Right cardiac atrium (tissue), 5 donors: ENCODE measurements at regions of chr7 and their contacts with region 1.

Region 1: DNA sequence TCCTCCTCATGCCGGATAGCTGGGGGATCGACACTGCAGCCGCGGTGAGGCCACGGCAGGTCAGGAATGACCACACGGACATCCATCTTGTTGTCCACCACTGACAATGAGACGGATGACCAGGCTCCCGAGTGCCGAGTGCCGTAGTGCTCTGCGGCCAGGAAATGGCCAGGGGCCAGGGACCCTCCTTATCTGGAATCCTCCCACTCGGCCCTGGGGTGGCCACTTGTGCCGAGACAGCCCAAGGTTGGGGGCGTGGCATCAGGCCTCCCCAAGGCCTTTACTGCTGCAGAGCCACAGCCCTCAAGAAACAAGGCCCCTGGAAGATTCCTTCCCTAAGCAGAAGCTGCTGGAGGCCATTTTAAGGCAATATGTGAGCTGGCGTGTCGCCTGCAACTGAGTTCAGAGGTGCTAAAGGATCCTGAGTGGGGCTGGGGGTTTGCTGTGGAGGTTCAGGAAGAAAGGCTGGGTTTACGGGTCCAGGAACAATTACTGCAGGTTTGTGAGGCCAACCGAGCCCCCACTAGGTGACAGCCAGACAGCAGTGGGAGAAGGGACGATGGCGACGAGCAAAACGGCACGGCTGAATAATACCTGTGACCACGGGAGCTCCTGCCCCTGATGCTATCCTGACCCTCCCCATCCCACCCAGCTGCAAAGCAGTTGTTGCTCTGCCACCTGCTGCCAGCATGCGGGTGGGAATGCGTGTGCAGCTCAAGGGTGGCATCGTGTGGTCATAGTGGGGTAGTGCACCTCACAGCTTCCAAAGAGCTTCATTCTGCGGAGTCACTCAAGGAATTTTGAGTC is 31.6 kb upstream of the LEP start:
- DNase-seq: peak; percentile 54 to 79 (median 77)
- ATAC-seq: peak; percentile 79 to 86
- H3K4me3 ChIP-seq: no peak overlapping the region
- H3K27ac ChIP-seq: no peak overlapping the region
- H3K4me1 ChIP-seq: no peaks in the 10 kb centered on the region
- H3K27me3 ChIP-seq: no peaks in the 10 kb centered on the region

Region 2: GRCh38 chr7:127708788-127709187 is 500.6 kb before region 1 on chr7:
- intact Hi-C with region 1: loop called (anchors 2 to 5 kb)
- DNase-seq: peak in 2 of 3 donors; percentile 68 to 80
- ATAC-seq: peak; percentile 85 to 88
- H3K4me3 ChIP-seq: no peak overlapping the region
- H3K27ac ChIP-seq: no peak overlapping the region
- H3K4me1 ChIP-seq: no peaks in the 10 kb centered on the region
- H3K27me3 ChIP-seq: no peaks in the 10 kb centered on the region

Region 3: GRCh38 chr7:127717502-127718339 is 491.7 kb before region 1 on chr7:
- intact Hi-C with region 1: loop called in 2 of 4 experiments (anchors 5 kb)
- DNase-seq: no peak
- ATAC-seq: no peak
- H3K4me3 ChIP-seq: no peak overlapping the region
- H3K27ac ChIP-seq: no peak overlapping the region
- H3K4me1 ChIP-seq: no peaks in the 10 kb centered on the region
- H3K27me3 ChIP-seq: no peaks in the 10 kb centered on the region

Region 4: GRCh38 chr7:128031901-128032604 is 177.4 kb before region 1 on chr7:
- intact Hi-C with region 1: loop called in 1 of 4 experiments (anchors 5 kb)
- DNase-seq: peak; percentile 59 to 78 (median 75)
- ATAC-seq: peak; percentile 73 to 83
- H3K4me3 ChIP-seq: peak overlapping the region; percentile 91
- H3K27ac ChIP-seq: peak overlapping the region; percentile 19
- H3K4me1 ChIP-seq: peaks cover 1% of the 10 kb centered on the region
- H3K27me3 ChIP-seq: no peaks in the 10 kb centered on the region

Region 5: GRCh38 chr7:128135515-128136214 is 73.8 kb before region 1 on chr7:
- intact Hi-C with region 1: loop called (anchors 5 kb)
- DNase-seq: peak; percentile 49 to 82 (median 81)
- ATAC-seq: peak; percentile 87 to 93
- H3K4me3 ChIP-seq: peak overlapping the region; percentile 62
- H3K27ac ChIP-seq: no peak overlapping the region
- H3K4me1 ChIP-seq: peaks cover 6% of the 10 kb centered on the region
- H3K27me3 ChIP-seq: no peaks in the 10 kb centered on the region